ENCODE measurements at regions of chr14 and their contacts with region 1.

Region 1: DNA sequence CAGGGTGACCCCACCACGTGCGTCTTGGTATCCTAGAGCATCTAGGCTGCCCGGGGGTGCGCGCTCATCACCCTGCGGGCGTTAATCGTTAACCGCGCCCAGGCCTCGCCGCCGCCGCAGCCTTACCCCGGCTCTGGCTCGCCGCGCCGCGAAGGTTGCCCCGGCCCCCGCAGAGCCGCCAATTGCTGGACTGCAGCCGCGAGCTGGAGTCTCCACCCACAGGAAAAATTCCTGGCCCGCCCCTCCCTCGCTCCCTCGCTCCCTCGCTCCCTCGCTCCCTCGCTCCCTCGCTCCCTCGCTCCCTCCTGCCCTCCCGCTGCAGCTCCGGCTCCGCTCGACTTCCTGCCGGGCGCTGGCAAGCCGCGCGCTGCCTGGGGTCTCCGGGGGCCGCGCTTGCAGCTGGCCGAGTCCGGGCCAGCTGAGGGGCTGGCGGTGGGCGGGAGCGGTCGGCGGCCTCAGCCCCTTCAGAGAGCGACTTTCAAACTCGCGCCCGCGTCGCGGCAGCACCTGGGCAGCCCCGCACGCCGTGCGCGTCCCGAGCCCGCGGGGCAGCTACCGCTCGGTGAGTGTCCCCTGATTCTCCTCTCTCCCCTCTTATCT is at the start of gene PLEKHG3:
- DNase-seq: peak; percentile 59 to 69
- ATAC-seq: peak; percentile 45 to 64 (median 63)
- H3K4me3 ChIP-seq: peak within 1 kb of the TSS; percentile 67
- H3K4me3 Mint-ChIP-seq: peak within 1 kb of the TSS; percentile 87
- H3K27ac ChIP-seq: peak within 1 kb of the TSS; percentile 77
- H3K27ac Mint-ChIP-seq: peak within 1 kb of the TSS; percentile 76 to 86
- H3K4me1 ChIP-seq: peaks cover 63% of the 10 kb centered on the region
- H3K4me1 Mint-ChIP-seq: peaks cover 53 to 54% of the 10 kb centered on the region in 2 donors
- H3K27me3 ChIP-seq: no peaks in the 10 kb centered on the region
- H3K27me3 Mint-ChIP-seq: no peaks in the 10 kb centered on the region
- CTCF ChIP-seq: no peak
- total RNA-seq, gene PLEKHG3: 184 to 285 (median 225) TPM

Region 2: DNA sequence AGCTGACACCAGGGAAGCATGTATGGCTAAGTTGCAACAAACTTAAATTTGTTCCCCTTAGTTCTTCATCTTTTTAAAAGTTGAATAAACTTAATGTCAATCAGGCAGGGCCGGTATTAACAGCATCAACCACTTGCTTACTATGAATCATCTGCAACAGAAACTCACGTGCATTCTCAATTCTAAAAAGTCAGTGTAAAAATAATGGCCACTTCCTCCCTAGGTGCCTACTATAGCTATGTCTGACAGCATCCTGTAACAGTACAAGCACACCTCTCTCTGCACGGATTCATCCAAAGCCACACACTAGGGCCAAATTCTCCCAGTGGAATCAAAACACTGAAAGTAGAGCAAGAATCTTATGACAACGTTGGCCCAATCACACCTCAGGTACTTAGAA is 105.8 kb before region 1 on chr14:
- intact Hi-C with region 1: no loop called
- DNase-seq: no peak
- ATAC-seq: no peak
- H3K4me3 ChIP-seq: no peak overlapping the region
- H3K4me3 Mint-ChIP-seq: no peak overlapping the region
- H3K27ac ChIP-seq: no peak overlapping the region
- H3K27ac Mint-ChIP-seq: no peak overlapping the region
- H3K4me1 ChIP-seq: no peaks in the 10 kb centered on the region
- H3K4me1 Mint-ChIP-seq: no peaks in the 10 kb centered on the region
- H3K27me3 ChIP-seq: no peaks in the 10 kb centered on the region
- H3K27me3 Mint-ChIP-seq: peaks cover 22 to 49% of the 10 kb centered on the region in 2 donors
- CTCF ChIP-seq: no peak

Region 3: GRCh38 chr14:64736271-64737122 is 32.3 kb after region 1 on chr14:
- intact Hi-C with region 1: loop called (anchors 5 kb)
- DNase-seq: no peak
- ATAC-seq: no peak
- H3K4me3 ChIP-seq: no peak overlapping the region
- H3K4me3 Mint-ChIP-seq: no peak overlapping the region
- H3K27ac ChIP-seq: peak overlapping the region; percentile 67
- H3K27ac Mint-ChIP-seq: peak overlapping the region; percentile 63 to 72
- H3K4me1 ChIP-seq: peaks cover 56% of the 10 kb centered on the region
- H3K4me1 Mint-ChIP-seq: peaks cover 34 to 44% of the 10 kb centered on the region in 2 donors
- H3K27me3 ChIP-seq: no peaks in the 10 kb centered on the region
- H3K27me3 Mint-ChIP-seq: no peaks in the 10 kb centered on the region
- CTCF ChIP-seq: no peak

Region 4: GRCh38 chr14:64758691-64759584 is 54.7 kb after region 1 on chr14:
- intact Hi-C with region 1: loop called (anchors 2 kb)
- DNase-seq: no peak
- ATAC-seq: no peak
- H3K4me3 ChIP-seq: no peak overlapping the region
- H3K4me3 Mint-ChIP-seq: peak overlapping the region; percentile 62
- H3K27ac ChIP-seq: peak overlapping the region; percentile 73
- H3K27ac Mint-ChIP-seq: peak overlapping the region; percentile 70 to 85
- H3K4me1 ChIP-seq: peaks cover 100% of the 10 kb centered on the region
- H3K4me1 Mint-ChIP-seq: peaks cover 76 to 98% of the 10 kb centered on the region in 2 donors
- H3K27me3 ChIP-seq: peaks cover 6% of the 10 kb centered on the region
- H3K27me3 Mint-ChIP-seq: peaks cover 0 to 12% of the 10 kb centered on the region in 2 donors
- CTCF ChIP-seq: no peak

Region 5: GRCh38 chr14:64844272-64844671 is 140.0 kb after region 1 on chr14:
- intact Hi-C with region 1: no loop called
- DNase-seq: no peak
- ATAC-seq: no peak
- H3K4me3 ChIP-seq: no peak overlapping the region
- H3K4me3 Mint-ChIP-seq: no peak overlapping the region
- H3K27ac ChIP-seq: no peak overlapping the region
- H3K27ac Mint-ChIP-seq: no peak overlapping the region
- H3K4me1 ChIP-seq: no peaks in the 10 kb centered on the region
- H3K4me1 Mint-ChIP-seq: peaks cover 0 to 5% of the 10 kb centered on the region in 2 donors
- H3K27me3 ChIP-seq: peaks cover 2% of the 10 kb centered on the region
- H3K27me3 Mint-ChIP-seq: peaks cover 30 to 73% of the 10 kb centered on the region in 2 donors
- CTCF ChIP-seq: no peak